Activated CD4-positive, alpha-beta memory T cell treated with anti-CD3 and anti-CD28 coated beads for 36 hours (primary cell): ENCODE measurements at regions of chr17 and their contacts with region 1.

Region 1: GRCh38 chr17:51056813-51057510 is 63.7 kb downstream of the SPAG9 start:
- DNase-seq: no peak
- H3K4me3 Mint-ChIP-seq: no peak overlapping the region
- H3K27ac Mint-ChIP-seq: no peak overlapping the region
- H3K4me1 Mint-ChIP-seq: peaks cover 13% of the 10 kb centered on the region
- H3K27me3 Mint-ChIP-seq: no peaks in the 10 kb centered on the region

Region 2: DNA sequence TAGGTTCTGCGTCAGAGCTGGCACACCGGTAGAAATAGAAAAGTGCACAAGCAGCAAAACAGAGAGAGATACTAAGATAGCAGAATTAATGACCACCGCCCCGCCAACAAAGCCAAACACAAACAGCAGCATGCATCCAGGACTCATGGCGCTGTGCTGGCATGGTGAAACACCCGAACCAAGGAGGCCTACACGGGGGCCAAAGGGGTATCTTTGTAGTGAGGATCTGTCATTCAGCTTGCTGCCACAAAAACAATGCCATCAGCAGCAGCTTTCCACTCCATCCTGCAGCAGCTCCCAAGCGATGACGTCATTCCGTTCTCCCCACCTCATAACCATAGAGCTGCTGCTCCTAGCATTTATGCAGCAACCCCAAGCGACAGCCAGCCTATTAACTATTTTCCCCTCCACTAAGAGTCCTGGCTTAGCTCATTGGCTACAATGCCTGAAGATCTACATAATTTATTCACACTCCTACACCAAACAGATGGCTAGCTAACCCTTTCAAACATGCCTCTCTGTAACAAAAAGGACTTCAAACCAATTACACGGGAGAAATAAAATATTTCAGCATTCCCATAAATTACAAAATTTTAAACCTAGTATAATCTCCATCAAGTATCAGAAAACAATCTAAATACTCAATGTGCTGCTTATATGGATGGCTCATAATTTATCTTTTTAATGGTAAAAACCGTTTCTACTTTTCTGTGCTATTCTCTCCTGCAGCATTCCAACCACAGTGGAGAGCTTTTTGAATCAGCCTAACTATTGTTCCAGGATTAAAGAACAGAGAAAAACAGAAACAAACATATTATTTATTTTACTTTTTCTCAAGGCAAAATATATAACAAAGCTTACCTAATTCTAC is 10.2 kb before region 1 on chr17:
- CTCF ChIA-PET with region 1: interaction called, 21 read pairs
- POLR2A ChIA-PET with region 1: no interaction called
- intact Hi-C with region 1: no loop called
- DNase-seq: no peak
- H3K4me3 Mint-ChIP-seq: no peak overlapping the region
- H3K27ac Mint-ChIP-seq: no peak overlapping the region
- H3K4me1 Mint-ChIP-seq: peaks cover 2% of the 10 kb centered on the region
- H3K27me3 Mint-ChIP-seq: no peaks in the 10 kb centered on the region